GM12878 (cell line): ENCODE measurements at regions of chr2 and their contacts with region 1.

Region 1: GRCh38 chr2:208175069-208175839 is 11.9 kb upstream of the CRYGA start:
- DNase-seq: peak; percentile 12
- ATAC-seq: peak; percentile 100
- H3K4me3 ChIP-seq: no peak overlapping the region
- H3K27ac ChIP-seq: no peak overlapping the region
- H3K4me1 ChIP-seq: no peaks in the 10 kb centered on the region
- H3K27me3 ChIP-seq: peaks cover 0 to 5% of the 10 kb centered on the region in 2 experiments; a peak in 1 of 4 replicates
- CTCF ChIP-seq: peak; percentile 88 to 96 (median 90)
- EP300 ChIP-seq: no peak
- POLR2A ChIP-seq: no peak
- RAD21 ChIP-seq: peak; percentile 71

Region 2: GRCh38 chr2:208254871-208255556 is 79.8 kb after region 1 on chr2 and contains the start of gene IDH1:
- CTCF ChIA-PET with region 1: interaction called, 51 read pairs
- POLR2A ChIA-PET with region 1: interaction called, 3 read pairs
- RAD21 ChIA-PET with region 1: interaction called, 25 read pairs
- SMC1A ChIA-PET with region 1: interaction called, 32 read pairs
- in situ Hi-C with region 1: no loop called
- intact Hi-C with region 1: loop called (anchors 1 kb)
- DNase-seq: peak; percentile 60
- ATAC-seq: peak; percentile 80
- H3K4me3 ChIP-seq: peak within 1 kb of the TSS; percentile 98
- H3K27ac ChIP-seq: peak within 1 kb of the TSS; percentile 35
- H3K4me1 ChIP-seq: no peaks in the 10 kb centered on the region; the same call in 1 of the 2 replicates
- H3K27me3 ChIP-seq: no peaks in the 10 kb centered on the region
- CTCF ChIP-seq: peak; percentile 37 to 52 (median 44); a peak in 5 of 6 replicates
- EP300 ChIP-seq: no peak
- POLR2A ChIP-seq: peak; percentile 52; the same call in 1 of the 2 replicates
- RAD21 ChIP-seq: no peak
- polyA plus RNA-seq, gene IDH1: 56.0 to 67.7 TPM

Region 3: DNA sequence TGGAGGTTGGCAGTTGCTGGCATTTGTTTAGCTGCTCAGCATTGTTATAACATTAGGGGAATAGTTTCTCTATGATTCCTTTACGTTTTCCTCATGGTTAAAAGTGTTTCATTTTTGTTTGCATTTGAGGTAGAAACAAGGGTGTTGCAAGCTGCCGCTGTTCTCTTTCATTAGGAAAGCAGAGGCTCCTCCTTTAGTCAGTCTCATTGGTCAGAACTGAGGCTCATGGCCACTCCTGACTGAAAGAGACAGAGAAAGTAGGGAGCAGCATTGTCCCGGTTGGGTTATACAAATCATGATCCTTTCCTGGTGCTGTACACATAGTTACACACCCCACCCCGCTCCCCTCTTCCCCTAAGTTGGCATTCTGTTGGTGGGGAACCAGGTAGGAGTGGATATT is 171.5 kb after region 1 on chr2:
- CTCF ChIA-PET with region 1: interaction called, 4 read pairs
- POLR2A ChIA-PET with region 1: no interaction called
- RAD21 ChIA-PET with region 1: no interaction called
- SMC1A ChIA-PET with region 1: no interaction called
- in situ Hi-C with region 1: no loop called
- intact Hi-C with region 1: loop called (anchors 10 kb)
- DNase-seq: no peak
- ATAC-seq: no peak
- H3K4me3 ChIP-seq: no peak overlapping the region
- H3K27ac ChIP-seq: no peak overlapping the region
- H3K4me1 ChIP-seq: no peaks in the 10 kb centered on the region
- H3K27me3 ChIP-seq: no peaks in the 10 kb centered on the region
- CTCF ChIP-seq: no peak
- EP300 ChIP-seq: no peak
- POLR2A ChIP-seq: no peak
- RAD21 ChIP-seq: no peak

Region 4: GRCh38 chr2:208373460-208374089 is 198.3 kb after region 1 on chr2:
- CTCF ChIA-PET with region 1: interaction called, 10 read pairs
- POLR2A ChIA-PET with region 1: no interaction called
- RAD21 ChIA-PET with region 1: interaction called, 4 read pairs
- SMC1A ChIA-PET with region 1: no interaction called
- in situ Hi-C with region 1: no loop called
- intact Hi-C with region 1: no loop called
- DNase-seq: no peak
- ATAC-seq: peak; percentile 75
- H3K4me3 ChIP-seq: no peak overlapping the region
- H3K27ac ChIP-seq: no peak overlapping the region
- H3K4me1 ChIP-seq: no peaks in the 10 kb centered on the region
- H3K27me3 ChIP-seq: no peaks in the 10 kb centered on the region
- CTCF ChIP-seq: peak; percentile 68 to 92 (median 77)
- EP300 ChIP-seq: no peak
- POLR2A ChIP-seq: no peak
- RAD21 ChIP-seq: peak; percentile 58

Region 5: GRCh38 chr2:209208211-209208610 is 1033.0 kb after region 1 on chr2:
- CTCF ChIA-PET with region 1: interaction called, 5 read pairs
- POLR2A ChIA-PET with region 1: no interaction called
- RAD21 ChIA-PET with region 1: no interaction called
- SMC1A ChIA-PET with region 1: no interaction called
- in situ Hi-C with region 1: loop called (anchors 25 kb)
- intact Hi-C with region 1: loop called (anchors 1 kb)
- DNase-seq: no peak
- ATAC-seq: peak; percentile 76
- H3K4me3 ChIP-seq: no peak overlapping the region
- H3K27ac ChIP-seq: no peak overlapping the region
- H3K4me1 ChIP-seq: no peaks in the 10 kb centered on the region
- H3K27me3 ChIP-seq: no peaks in the 10 kb centered on the region
- CTCF ChIP-seq: peak; percentile 56 to 64 (median 62); a peak in 5 of 6 replicates
- EP300 ChIP-seq: no peak
- POLR2A ChIP-seq: no peak
- RAD21 ChIP-seq: peak; percentile 86